Heart left ventricle (tissue), 16 donors: ENCODE measurements at regions of chr1 and their contacts with region 1.

Region 1: DNA sequence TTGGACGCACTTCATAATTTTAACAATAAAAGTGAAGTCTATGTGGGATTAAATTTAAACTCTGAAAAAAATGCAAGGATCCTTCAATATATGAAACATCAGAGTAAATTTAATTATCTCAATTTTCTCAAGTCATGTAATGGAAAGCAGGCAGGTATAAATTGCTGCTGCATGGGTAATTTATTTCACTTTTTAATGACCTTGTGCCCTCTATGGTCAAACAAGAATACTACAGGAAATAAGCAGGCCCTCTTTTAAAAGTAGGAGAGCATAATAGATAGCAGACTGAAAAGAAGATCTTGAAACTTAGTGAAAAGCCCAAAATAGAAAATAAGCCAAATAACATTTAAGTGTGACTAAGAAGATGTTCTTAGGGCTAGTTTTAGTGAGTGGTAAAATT is 22.9 kb downstream of the BCAS2 start:
- DNase-seq: no peak
- ATAC-seq: no peak
- H3K4me3 ChIP-seq: no peak overlapping the region
- H3K27ac ChIP-seq: no peak overlapping the region
- H3K4me1 ChIP-seq: no peaks in the 10 kb centered on the region
- H3K27me3 ChIP-seq: no peaks in the 10 kb centered on the region
- CTCF ChIP-seq: peak in 11 of 12 donors; percentile 22 to 54 (median 36)
- POLR2A ChIP-seq: no peak

Region 2: DNA sequence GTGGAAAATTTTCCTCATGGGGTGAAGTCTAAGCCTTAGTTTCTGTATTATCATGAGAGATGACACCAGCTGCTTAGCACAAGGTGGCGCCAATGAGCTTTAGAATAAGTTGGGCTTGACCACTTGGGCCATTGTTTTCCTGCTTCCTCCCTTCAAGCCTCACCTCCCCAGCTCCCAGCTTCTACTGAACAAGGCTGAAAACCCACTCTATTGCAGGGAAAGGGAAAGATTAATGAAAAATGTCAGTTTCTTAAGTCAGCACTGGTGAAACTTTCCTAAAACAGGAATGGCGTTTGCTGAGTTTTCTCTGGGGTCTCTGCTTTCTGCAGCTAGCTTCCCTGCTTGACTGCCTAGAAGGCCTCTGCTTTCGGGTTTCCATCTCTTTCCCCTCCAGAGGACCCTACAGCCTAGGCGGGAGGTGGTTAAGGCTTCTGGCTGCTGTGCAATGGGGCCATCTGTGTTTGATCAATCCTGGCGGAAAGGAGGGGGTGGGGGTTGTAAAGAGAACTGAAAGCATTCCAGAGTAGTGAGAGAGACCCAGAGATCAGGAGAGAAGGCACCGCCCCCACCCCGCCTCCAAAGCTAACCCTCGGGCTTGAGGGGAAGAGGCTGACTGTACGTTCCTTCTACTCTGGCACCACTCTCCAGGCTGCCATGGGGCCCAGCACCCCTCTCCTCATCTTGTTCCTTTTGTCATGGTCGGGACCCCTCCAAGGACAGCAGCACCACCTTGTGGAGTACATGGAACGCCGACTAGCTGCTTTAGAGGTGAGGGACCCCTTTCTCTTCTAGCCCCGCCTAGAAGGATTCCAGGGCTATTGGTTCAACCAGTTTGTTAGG is 579.5 kb before region 1 on chr1 and contains the start of gene OLFML3:
- intact Hi-C with region 1: loop called in 3 of 10 experiments (anchors 5 to 10 kb)
- DNase-seq: peak; percentile 83 to 92 (median 86)
- ATAC-seq: peak; percentile 61 to 81 (median 74)
- H3K4me3 ChIP-seq: peak within 1 kb of the TSS in 10 of 12 donors; percentile 16 to 56 (median 40)
- H3K27ac ChIP-seq: peak within 1 kb of the TSS in 11 of 12 donors; percentile 24 to 86 (median 67)
- H3K4me1 ChIP-seq: peaks cover 0 to 83% (median 28%) of the 10 kb centered on the region in 12 donors
- H3K27me3 ChIP-seq: no peaks in the 10 kb centered on the region
- CTCF ChIP-seq: peak; percentile 48 to 85 (median 73)
- POLR2A ChIP-seq: no peak
- total RNA-seq, gene OLFML3: 5.3 to 27.2 (median 13.5) TPM

Region 3: DNA sequence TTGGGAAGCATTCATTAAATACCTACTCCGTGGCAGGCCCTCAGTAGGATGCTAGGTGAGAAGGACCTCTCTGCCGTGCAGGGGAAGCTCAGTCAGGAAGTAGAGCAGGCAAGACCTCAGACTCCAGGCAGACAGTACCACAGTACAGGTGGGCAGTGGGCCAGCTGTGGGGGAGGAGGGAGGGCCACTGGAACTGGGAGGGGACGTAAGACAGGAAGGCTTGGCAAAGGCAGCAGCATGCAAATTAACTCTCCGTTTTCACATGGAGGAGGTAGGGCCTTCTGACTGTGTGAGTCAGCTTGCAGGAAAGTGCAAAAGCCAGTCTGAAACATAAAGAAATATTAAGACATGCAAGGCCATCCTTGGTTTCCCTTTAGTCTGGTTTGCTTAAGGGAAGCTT is 205.3 kb before region 1 on chr1:
- intact Hi-C with region 1: loop called in 5 of 10 experiments (anchors 5 to 10 kb)
- DNase-seq: peak; percentile 59 to 80 (median 67)
- ATAC-seq: peak; percentile 74 to 92 (median 84)
- H3K4me3 ChIP-seq: no peak overlapping the region
- H3K27ac ChIP-seq: peak overlapping the region in 1 of 12 donors; percentile 41
- H3K4me1 ChIP-seq: peaks cover 0 to 14% (median 6%) of the 10 kb centered on the region in 12 donors
- H3K27me3 ChIP-seq: no peaks in the 10 kb centered on the region
- CTCF ChIP-seq: no peak
- POLR2A ChIP-seq: no peak

Region 4: DNA sequence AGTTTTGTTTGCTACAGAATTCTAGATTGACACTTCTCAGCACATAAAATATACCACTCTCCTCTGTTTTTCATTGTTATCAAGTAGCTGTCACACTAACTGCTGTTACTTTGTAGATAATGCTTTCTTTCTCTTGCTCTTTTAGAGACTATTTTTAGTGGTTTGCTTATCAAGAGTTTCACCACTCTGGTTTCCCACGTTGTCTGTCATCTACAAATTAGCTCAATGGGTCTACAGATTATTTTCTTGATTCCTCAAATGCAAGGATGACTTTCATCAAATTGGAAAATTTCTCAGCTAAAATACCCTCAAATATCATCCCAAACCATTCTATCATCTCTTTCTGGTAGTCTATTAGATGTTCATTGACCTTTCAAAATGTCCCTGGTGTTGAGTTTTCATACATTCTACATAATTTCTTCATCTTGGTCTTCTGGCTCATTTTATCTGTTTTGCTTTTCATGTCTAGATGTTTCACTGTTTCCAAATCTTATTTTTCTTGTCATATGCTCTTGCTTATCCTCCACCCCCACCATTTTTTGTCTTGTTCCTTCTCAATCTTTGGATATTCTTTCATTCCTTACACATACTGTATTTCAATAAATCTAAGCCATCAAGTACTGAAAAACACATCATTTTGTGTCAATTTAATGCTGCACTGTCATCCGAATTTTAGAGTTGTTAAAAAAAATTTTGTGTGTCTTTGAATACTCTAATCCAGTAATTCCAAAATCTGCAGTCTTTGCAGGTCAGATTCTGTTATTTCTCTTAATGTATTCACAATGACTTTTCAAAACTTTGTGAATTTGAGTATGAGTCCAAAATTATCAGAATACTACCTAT is 169.9 kb before region 1 on chr1:
- intact Hi-C with region 1: loop called in 1 of 10 experiments (anchors 10 kb)
- DNase-seq: no peak
- ATAC-seq: no peak
- H3K4me3 ChIP-seq: no peak overlapping the region
- H3K27ac ChIP-seq: no peak overlapping the region
- H3K4me1 ChIP-seq: peaks cover 0 to 13% (median 0%) of the 10 kb centered on the region in 12 donors
- H3K27me3 ChIP-seq: no peaks in the 10 kb centered on the region
- CTCF ChIP-seq: no peak
- POLR2A ChIP-seq: no peak

Region 5: GRCh38 chr1:114402843-114403242 is 155.7 kb before region 1 on chr1:
- intact Hi-C with region 1: loop called in 2 of 10 experiments (anchors 10 kb)
- DNase-seq: no peak
- ATAC-seq: no peak
- H3K4me3 ChIP-seq: no peak overlapping the region
- H3K27ac ChIP-seq: no peak overlapping the region
- H3K4me1 ChIP-seq: no peaks in the 10 kb centered on the region
- H3K27me3 ChIP-seq: no peaks in the 10 kb centered on the region
- CTCF ChIP-seq: no peak
- POLR2A ChIP-seq: no peak